Motor neuron (in vitro differentiated cells): ENCODE measurements at regions of chr19 and their contacts with region 1.

Region 1: GRCh38 chr19:1113033-1113985 is 9.5 kb downstream of the GPX4 start:
- ATAC-seq: peak; percentile 9 to 87 (median 73)
- H3K4me3 ChIP-seq: peak overlapping the region in 1 of 5 donors; percentile 4
- H3K27ac ChIP-seq: peak overlapping the region; percentile 67 to 88
- H3K4me1 ChIP-seq: peaks cover 28 to 34% of the 10 kb centered on the region in 2 donors

Region 2: GRCh38 chr19:1173845-1174809 is 60.8 kb after region 1 on chr19 and contains the start of gene SBNO2:
- in situ Hi-C with region 1: loop called in 1 of 9 experiments (anchors 10 kb)
- ATAC-seq: peak; percentile 12 to 60 (median 40)
- H3K4me3 ChIP-seq: peak within 1 kb of the TSS; percentile 76 to 100 (median 92)
- H3K27ac ChIP-seq: peak within 1 kb of the TSS; percentile 78 to 84
- H3K4me1 ChIP-seq: peaks cover 26 to 39% of the 10 kb centered on the region in 2 donors
- total RNA-seq, gene SBNO2: 5.6 to 54.9 (median 22.5) TPM

Region 3: GRCh38 chr19:1183534-1184172 is 70.3 kb after region 1 on chr19:
- in situ Hi-C with region 1: loop called in 3 of 9 experiments (anchors 10 kb)
- ATAC-seq: peak; percentile 9 to 53 (median 30)
- H3K4me3 ChIP-seq: no peak overlapping the region
- H3K27ac ChIP-seq: no peak overlapping the region
- H3K4me1 ChIP-seq: peaks cover 0 to 3% of the 10 kb centered on the region in 2 donors